A549 (cell line): ENCODE measurements at regions of chr7 and their contacts with region 1.

Region 1: DNA sequence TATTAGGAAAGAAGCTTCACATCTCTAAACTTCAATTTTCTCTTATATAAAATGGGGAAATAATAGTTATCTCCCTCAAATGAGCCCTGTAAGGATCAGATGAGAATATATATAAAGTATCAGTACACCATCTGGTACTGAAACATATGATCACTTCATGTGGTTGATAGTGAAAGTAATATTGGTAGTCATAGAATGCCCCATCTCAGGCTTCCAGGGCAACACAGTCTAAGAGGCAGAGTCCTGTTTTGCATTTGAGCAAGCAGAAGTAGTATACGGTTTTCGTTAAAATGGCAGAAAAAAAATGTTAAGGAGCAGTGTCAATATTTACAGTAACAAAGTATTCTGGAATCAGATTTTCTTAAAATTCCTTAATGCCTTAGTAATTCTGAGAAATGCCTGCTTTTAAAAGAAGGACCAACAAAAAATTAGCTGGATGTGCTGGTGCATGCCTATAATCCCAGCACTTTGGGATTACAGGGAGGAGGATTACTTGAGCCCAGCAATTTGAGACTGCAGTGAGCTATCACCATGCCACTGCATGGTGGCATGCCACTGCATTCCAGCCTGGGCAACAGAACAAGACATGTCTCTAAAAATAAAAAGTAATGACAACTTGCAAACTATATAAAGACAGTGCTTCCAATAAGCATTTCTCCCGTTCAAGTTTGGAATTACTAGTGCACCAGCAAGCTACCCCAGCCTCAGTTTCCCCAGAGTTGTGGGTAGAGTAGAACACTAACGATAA is 19.8 kb downstream of the KBTBD2 start:
- DNase-seq: no peak
- ATAC-seq: no peak
- H3K4me3 ChIP-seq: no peak overlapping the region
- H3K27ac ChIP-seq: no peak overlapping the region
- H3K4me1 ChIP-seq: 0 out of 3 replicates have a peak, but pooled peaks cover 7% of the 10 kb centered on the region
- CTCF ChIP-seq: no peak
- EP300 ChIP-seq: no peak
- POLR2A ChIP-seq: no peak
- RAD21 ChIP-seq: no peak

Region 2: DNA sequence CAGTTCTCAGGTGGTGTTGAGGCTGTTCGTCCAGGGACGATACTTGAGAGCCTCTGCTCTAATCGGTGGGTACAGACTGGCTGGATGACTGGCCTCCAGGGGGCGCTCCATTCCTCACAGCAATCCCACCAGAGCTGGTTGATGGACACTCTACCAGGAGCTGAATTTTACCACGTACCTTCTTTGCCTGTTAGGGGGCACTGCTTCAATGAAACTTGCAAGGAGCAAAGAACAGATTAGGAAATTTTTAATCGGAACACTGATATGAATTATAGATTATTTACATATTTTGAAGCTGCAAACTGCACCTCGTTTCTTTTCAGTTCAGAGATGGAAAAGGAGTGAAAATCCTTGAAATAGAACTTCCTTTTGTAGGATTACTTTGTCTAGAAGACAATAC is 25.1 kb before region 1 on chr7:
- CTCF ChIA-PET with region 1: interaction called, 11 read pairs
- POLR2A ChIA-PET with region 1: no interaction called
- DNase-seq: peak; percentile 42 to 83
- ATAC-seq: peak; percentile 97 to 100
- H3K4me3 ChIP-seq: no peak overlapping the region
- H3K27ac ChIP-seq: no peak overlapping the region
- H3K4me1 ChIP-seq: 0 out of 3 replicates have a peak, but pooled peaks cover 3% of the 10 kb centered on the region
- CTCF ChIP-seq: peak; percentile 75
- EP300 ChIP-seq: no peak
- POLR2A ChIP-seq: no peak
- RAD21 ChIP-seq: peak; percentile 44 to 60; a peak in 4 of 5 replicates

Region 3: GRCh38 chr7:32921896-32922295 is 50.1 kb after region 1 on chr7:
- CTCF ChIA-PET with region 1: no interaction called
- POLR2A ChIA-PET with region 1: no interaction called
- DNase-seq: no peak
- ATAC-seq: no peak
- H3K4me3 ChIP-seq: no peak overlapping the region
- H3K27ac ChIP-seq: no peak overlapping the region
- H3K4me1 ChIP-seq: no peaks in the 10 kb centered on the region
- CTCF ChIP-seq: no peak
- EP300 ChIP-seq: no peak
- POLR2A ChIP-seq: no peak
- RAD21 ChIP-seq: no peak